Activated B cell treated with CpG ODN at 0.5 μM for 24 hours (primary cell): ENCODE measurements at regions of chr17 and their contacts with region 1.

Region 1: DNA sequence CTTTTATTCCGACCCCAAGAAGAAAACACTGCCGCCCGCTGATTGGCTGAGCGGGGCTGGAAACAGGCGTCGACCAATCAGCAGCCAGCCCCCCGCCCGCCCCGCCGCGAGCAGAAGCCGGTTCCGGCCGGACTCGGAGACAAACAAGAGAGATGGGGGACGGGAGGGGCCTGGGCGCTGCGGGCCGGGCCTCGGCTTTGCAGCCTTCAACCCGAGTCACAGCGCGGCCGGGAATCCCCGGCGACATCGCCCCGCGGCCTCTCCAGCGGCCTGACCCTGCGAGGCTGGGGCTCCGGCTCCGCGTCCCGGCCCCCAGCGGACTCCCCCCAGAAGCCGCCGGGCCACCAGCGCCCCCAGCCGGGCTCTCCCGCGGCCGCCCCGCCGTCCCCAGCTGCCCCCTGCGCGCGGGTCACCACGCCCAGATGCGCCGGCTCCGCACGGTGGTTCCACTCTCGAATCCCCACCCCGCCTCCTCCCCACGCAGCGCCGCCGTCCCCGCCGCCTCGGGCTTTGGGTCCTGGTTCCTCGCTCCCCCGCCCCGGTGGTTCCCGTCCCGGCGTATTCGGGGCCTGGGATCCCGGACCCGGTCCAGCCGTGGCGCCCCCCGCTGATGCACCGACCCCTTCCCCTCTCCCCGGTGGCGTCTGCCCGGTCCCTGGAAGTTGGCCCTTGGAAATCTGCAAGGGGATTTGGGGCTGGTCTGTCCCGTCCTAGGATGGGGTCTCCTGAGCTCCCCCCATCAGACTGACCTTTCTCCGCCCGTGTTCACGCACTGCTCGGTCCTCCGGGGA is 417 bp upstream of the SLC43A2 start:
- DNase-seq: peak; percentile 85
- ATAC-seq: peak; percentile 70
- H3K4me3 Mint-ChIP-seq: peak overlapping the region; percentile 99
- H3K27ac Mint-ChIP-seq: peak overlapping the region; percentile 98
- H3K4me1 Mint-ChIP-seq: peaks cover 56% of the 10 kb centered on the region
- H3K27me3 Mint-ChIP-seq: no peaks in the 10 kb centered on the region
- CTCF ChIP-seq: no peak

Region 2: DNA sequence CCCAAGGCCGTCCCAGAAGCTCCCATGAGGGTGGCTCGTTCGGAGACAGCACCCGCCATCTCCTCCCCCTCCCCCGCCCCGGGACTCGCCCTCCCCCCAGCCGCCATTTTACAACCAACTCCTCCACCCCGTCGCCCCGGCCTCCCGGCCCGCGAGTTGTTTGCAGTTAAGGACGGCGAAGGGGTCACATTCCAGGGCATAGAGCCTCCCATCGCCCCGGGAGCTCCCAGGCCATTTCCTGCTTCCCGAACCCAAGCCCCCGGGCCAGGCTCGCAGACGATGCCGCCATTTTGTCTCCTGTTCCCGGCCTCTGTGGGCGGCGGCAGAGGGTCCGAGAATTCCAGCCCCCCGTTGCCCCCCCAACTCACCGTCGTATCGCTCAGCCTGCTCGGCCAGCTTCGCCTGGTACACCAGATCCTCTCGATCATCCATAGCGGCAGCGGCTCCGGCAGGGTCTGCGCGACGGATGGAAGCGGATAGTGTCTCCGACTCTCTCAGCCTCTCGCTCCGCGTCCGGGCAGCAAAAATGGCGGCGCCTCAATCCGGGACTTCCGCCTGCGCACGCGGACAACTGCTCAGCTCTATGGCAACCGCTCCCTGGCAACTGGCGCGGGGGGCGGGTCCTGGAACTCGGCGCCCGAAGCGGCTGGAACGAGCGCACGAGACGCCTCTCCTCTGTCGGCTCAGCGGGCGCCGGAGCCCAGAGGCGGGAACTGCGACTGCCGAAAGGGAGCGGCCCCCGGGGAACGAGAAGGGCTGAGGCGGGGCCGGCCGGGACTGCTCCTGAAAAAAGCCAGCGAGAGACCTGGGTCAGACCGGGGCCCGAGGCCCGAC is 229.2 kb before region 1 on chr17 and contains the start of gene YWHAE:
- CTCF ChIA-PET with region 1: no interaction called
- POLR2A ChIA-PET with region 1: interaction called, 8 read pairs
- intact Hi-C with region 1: loop called (anchors 1 kb)
- DNase-seq: peak; percentile 94
- ATAC-seq: peak; percentile 85
- H3K4me3 Mint-ChIP-seq: peak within 1 kb of the TSS; percentile 98
- H3K27ac Mint-ChIP-seq: peak within 1 kb of the TSS; percentile 98
- H3K4me1 Mint-ChIP-seq: peaks cover 44% of the 10 kb centered on the region
- H3K27me3 Mint-ChIP-seq: no peaks in the 10 kb centered on the region
- CTCF ChIP-seq: no peak
- total RNA-seq, gene YWHAE: 253 and 263 TPM in 2 replicates

Region 3: GRCh38 chr17:1516388-1517161 is 112.5 kb before region 1 on chr17 and contains the start of gene INPP5K:
- CTCF ChIA-PET with region 1: interaction called, 23 read pairs
- POLR2A ChIA-PET with region 1: interaction called, 45 read pairs
- intact Hi-C with region 1: loop called (anchors 1 kb)
- DNase-seq: peak; percentile 96
- ATAC-seq: peak; percentile 90
- H3K4me3 Mint-ChIP-seq: peak within 1 kb of the TSS; percentile 89
- H3K27ac Mint-ChIP-seq: peak within 1 kb of the TSS; percentile 86
- H3K4me1 Mint-ChIP-seq: peaks cover 19% of the 10 kb centered on the region
- H3K27me3 Mint-ChIP-seq: no peaks in the 10 kb centered on the region
- CTCF ChIP-seq: no peak
- total RNA-seq, gene INPP5K: 46.0 and 50.0 TPM in 2 replicates

Region 4: GRCh38 chr17:1590031-1590748 is 38.9 kb before region 1 on chr17:
- CTCF ChIA-PET with region 1: interaction called, 3 read pairs
- POLR2A ChIA-PET with region 1: interaction called, 222 read pairs
- intact Hi-C with region 1: loop called (anchors 1 kb)
- DNase-seq: no peak
- ATAC-seq: no peak
- H3K4me3 Mint-ChIP-seq: no peak overlapping the region
- H3K27ac Mint-ChIP-seq: peak overlapping the region; percentile 46
- H3K4me1 Mint-ChIP-seq: peaks cover 48% of the 10 kb centered on the region
- H3K27me3 Mint-ChIP-seq: no peaks in the 10 kb centered on the region
- CTCF ChIP-seq: no peak

Region 5: DNA sequence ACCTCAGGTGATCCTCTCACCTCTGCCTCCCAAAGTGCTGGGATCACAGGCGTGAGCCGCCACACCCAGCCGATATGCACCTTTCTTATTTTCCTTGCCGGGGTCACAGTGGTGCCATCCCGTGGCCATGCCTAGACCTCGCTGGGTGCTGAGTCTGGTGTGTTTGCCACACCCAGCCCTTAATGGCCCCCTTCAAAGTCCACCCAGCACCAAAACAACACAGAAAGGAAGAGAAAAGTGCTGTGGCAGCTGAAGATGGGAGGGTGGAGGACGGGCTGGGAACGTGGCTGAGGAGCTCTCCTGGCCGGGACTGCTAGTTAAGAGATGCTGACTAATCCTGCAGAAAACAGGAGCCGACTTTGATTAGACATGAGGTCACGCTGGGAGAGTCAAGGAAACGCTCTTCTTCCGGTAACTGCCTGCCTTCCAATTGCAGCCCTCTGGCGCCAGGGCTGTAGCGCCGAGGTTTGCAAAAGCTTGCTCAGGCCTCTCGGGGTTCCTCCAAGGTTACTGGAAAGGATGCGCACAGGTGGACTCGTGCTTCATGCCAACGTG is 11.4 kb before region 1 on chr17:
- CTCF ChIA-PET with region 1: interaction called, 4 read pairs
- POLR2A ChIA-PET with region 1: interaction called, 336 read pairs
- intact Hi-C with region 1: no loop called
- DNase-seq: no peak
- ATAC-seq: no peak
- H3K4me3 Mint-ChIP-seq: no peak overlapping the region
- H3K27ac Mint-ChIP-seq: peak overlapping the region; percentile 30
- H3K4me1 Mint-ChIP-seq: peaks cover 5% of the 10 kb centered on the region
- H3K27me3 Mint-ChIP-seq: no peaks in the 10 kb centered on the region
- CTCF ChIP-seq: no peak

Region 6: GRCh38 chr17:1684378-1685189 is 55.5 kb after region 1 on chr17 and contains the start of gene PRPF8:
- CTCF ChIA-PET with region 1: no interaction called
- POLR2A ChIA-PET with region 1: interaction called, 3 read pairs
- intact Hi-C with region 1: loop called (anchors 1 kb)
- DNase-seq: peak; percentile 95
- ATAC-seq: peak; percentile 99
- H3K4me3 Mint-ChIP-seq: peak within 1 kb of the TSS; percentile 100
- H3K27ac Mint-ChIP-seq: peak within 1 kb of the TSS; percentile 96
- H3K4me1 Mint-ChIP-seq: peaks cover 33% of the 10 kb centered on the region
- H3K27me3 Mint-ChIP-seq: no peaks in the 10 kb centered on the region
- CTCF ChIP-seq: no peak
- total RNA-seq, gene PRPF8: 401 and 442 TPM in 2 replicates

Region 7: DNA sequence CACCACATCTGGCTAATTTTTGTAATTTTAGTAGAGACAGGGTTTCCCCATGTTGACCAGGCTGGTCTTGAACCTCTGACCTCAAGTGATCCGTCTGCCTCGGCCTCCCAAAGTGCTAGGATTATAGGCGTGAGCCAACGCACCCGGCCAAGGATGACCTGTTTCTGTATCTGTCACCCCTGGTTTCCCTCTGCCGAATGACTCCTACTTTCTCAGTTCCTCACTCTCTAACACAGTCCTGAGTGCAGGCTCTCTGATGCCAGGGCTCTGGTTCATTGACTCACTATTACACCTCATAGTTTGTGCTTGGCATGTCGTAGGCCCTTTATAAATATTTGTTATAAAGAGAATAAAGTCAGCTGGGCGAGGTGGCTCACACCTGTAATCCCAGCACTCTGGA is 66.3 kb after region 1 on chr17:
- CTCF ChIA-PET with region 1: no interaction called
- POLR2A ChIA-PET with region 1: no interaction called
- intact Hi-C with region 1: no loop called
- DNase-seq: no peak
- ATAC-seq: peak; percentile 79
- H3K4me3 Mint-ChIP-seq: no peak overlapping the region
- H3K27ac Mint-ChIP-seq: no peak overlapping the region
- H3K4me1 Mint-ChIP-seq: no peaks in the 10 kb centered on the region
- H3K27me3 Mint-ChIP-seq: peaks cover 7% of the 10 kb centered on the region
- CTCF ChIP-seq: no peak

Region 8: DNA sequence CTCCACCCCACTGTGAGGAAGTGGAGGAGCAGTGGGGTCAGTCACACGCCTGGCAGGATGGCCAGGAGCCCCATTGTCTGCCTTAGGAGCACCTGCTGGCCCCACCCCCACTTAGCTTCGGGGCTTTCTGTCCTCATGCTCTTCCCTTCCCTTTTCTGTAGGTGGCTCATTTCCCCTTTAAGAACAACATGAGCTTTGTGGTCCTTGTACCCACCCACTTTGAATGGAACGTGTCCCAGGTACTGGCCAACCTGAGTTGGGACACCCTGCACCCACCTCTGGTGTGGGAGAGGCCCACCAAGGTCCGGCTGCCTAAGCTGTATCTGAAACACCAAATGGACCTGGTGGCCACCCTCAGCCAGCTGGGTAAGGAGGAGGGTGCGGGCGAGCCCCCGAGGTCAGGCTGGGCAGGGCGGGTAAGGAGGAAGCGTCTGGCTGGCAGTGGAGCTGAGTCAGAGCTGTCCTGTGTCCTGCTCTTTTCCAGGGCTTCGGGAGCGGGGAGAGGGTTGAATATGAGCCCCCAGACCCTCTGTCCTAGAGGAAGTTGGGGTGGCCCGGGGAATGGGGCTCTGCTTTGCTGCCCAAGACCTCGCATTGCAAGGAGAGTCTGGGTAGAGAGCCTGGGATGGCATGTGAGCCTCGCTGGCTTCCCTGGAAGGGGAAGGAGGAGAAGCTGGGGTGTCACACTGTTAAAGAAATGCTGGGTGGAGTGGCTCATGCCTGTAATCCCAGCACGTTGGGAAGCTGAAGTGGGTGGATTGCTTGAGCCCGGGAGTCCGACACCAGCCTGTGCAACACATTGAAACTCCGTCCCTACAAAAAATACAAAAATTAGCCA is 123.6 kb after region 1 on chr17:
- CTCF ChIA-PET with region 1: no interaction called
- POLR2A ChIA-PET with region 1: no interaction called
- intact Hi-C with region 1: no loop called
- DNase-seq: no peak
- ATAC-seq: peak; percentile 86
- H3K4me3 Mint-ChIP-seq: peak overlapping the region; percentile 38
- H3K27ac Mint-ChIP-seq: no peak overlapping the region
- H3K4me1 Mint-ChIP-seq: peaks cover 15% of the 10 kb centered on the region
- H3K27me3 Mint-ChIP-seq: no peaks in the 10 kb centered on the region
- CTCF ChIP-seq: no peak

Region 9: DNA sequence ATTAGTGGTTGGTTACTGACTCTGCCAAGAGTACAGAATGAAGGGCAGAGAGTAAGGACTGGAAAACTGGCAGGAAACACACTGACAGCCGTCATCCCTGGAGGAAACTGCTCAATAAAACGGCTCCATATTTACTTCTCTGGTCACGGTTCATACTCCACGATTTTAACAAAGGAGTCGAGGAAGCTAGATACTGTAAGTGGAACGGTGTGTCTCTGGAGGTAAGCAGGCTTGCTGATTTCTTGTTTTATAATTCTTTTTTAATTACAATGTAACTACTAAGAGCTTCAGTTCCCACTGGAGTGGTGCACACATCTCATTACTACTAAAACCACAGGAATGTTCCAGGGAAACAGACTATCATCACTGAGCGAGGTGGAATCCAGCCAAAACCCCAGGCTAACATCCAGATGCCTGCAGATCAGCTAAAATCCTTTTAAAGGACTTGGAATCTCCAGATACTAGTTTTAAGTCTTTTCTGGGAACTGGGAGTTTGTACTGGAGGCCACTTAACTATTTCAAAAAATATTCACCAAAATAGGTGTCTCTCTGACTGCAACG is 150.6 kb after region 1 on chr17:
- CTCF ChIA-PET with region 1: no interaction called
- POLR2A ChIA-PET with region 1: no interaction called
- intact Hi-C with region 1: no loop called
- DNase-seq: no peak
- ATAC-seq: no peak
- H3K4me3 Mint-ChIP-seq: no peak overlapping the region
- H3K27ac Mint-ChIP-seq: no peak overlapping the region
- H3K4me1 Mint-ChIP-seq: peaks cover 33% of the 10 kb centered on the region
- H3K27me3 Mint-ChIP-seq: no peaks in the 10 kb centered on the region
- CTCF ChIP-seq: no peak